BJ (cell line): ENCODE measurements at regions of chr2 and their contacts with region 1.

Region 1: DNA sequence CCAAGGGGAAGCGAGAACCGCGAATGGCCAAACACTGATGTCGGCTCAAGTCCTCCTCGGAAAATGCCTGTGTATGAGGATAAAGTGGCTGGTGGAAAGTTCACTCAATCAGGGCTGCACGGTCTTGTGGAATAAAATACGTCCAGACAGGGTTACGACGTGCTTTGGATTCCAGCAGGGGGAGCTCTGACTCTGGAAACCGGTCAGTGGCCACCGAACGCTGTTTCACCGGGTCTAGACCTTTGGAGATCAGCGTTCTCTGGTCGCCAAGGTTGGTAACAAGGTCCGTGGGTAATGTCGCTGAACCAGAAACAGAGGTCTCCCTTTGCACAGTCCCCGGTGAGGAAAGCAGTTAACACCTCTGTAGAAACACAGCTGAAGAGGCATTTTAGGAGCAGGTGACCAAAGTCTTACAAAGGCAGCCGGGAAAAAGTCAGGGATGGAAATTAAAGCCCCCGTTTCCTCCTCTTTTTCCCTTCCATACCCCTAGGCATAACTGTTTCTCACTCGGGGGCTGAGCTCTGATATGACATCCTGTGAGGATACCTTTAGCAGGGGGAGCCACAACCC is 47.8 kb downstream of the CDCA7 start:
- DNase-seq: peak; percentile 9
- H3K4me3 ChIP-seq: 0 out of 2 replicates have a peak overlapping the region, but pooled peaks have one; percentile 0
- H3K27me3 ChIP-seq: peaks cover 24% of the 10 kb centered on the region
- CTCF ChIP-seq: peak; percentile 90

Region 2: DNA sequence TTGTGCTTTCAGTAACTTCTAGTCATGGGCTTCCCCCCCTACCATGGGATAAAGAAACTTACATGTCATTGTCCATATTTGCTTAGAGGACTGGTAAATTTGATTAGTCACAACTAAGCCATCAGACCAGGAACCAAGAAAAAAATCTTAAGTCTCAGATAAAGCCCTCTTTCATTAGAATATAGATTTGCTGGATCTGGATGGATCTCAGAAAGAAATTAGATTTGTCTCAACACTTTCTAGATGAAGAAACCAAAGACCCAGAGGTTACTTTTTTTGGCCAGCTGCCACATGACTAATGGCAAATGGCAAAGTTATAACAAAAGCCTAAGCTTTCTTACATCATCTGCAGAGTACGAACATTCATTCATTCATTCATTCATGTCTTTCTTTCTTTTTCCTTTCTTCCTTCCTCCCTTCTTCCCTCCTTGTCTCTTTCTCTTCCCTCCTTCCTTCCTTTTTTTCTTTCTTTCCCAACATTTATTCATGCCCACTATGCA is 12.4 kb after region 1 on chr2:
- CTCF ChIA-PET with region 1: interaction called, 15 read pairs
- POLR2A ChIA-PET with region 1: no interaction called
- DNase-seq: no peak
- H3K4me3 ChIP-seq: no peak overlapping the region
- H3K27me3 ChIP-seq: peaks cover 6% of the 10 kb centered on the region; the same call in 1 of the 2 replicates
- CTCF ChIP-seq: no peak

Region 3: GRCh38 chr2:173448938-173449471 is 46.5 kb after region 1 on chr2:
- CTCF ChIA-PET with region 1: interaction called, 15 read pairs
- POLR2A ChIA-PET with region 1: no interaction called
- DNase-seq: peak; percentile 17
- H3K4me3 ChIP-seq: peak overlapping the region; percentile 18; the same call in 1 of the 2 replicates
- H3K27me3 ChIP-seq: no peaks in the 10 kb centered on the region
- CTCF ChIP-seq: peak; percentile 77

Region 4: DNA sequence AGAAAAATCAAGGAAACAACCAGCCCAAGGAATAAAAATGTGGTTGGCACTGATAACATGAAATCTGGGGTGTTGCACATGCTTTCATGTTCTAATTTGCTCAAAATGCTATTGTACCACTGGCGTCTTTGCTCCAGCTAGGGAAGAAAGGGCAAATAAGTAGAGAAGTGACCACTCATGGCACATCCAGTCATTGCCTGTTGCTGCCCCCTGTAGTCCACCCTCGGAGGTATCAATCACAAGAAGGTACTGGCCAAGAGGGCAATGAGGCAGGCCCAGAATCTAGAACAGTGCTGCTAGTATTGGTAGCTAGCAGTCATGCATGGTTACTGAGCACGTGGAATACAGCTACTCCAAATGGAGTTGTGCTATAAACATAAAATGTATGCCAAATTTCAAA is 165.6 kb after region 1 on chr2:
- CTCF ChIA-PET with region 1: interaction called, 77 read pairs
- POLR2A ChIA-PET with region 1: no interaction called
- DNase-seq: no peak
- H3K4me3 ChIP-seq: no peak overlapping the region
- H3K27me3 ChIP-seq: peaks cover 2% of the 10 kb centered on the region; the same call in 1 of the 2 replicates
- CTCF ChIP-seq: peak; percentile 55

Region 5: GRCh38 chr2:173667417-173667816 is 264.9 kb after region 1 on chr2:
- CTCF ChIA-PET with region 1: interaction called, 11 read pairs
- POLR2A ChIA-PET with region 1: no interaction called
- DNase-seq: no peak
- H3K4me3 ChIP-seq: no peak overlapping the region
- H3K27me3 ChIP-seq: 0 out of 2 replicates have a peak, but pooled peaks cover 1% of the 10 kb centered on the region
- CTCF ChIP-seq: peak; percentile 34; the same call in 1 of the 2 replicates

Region 6: DNA sequence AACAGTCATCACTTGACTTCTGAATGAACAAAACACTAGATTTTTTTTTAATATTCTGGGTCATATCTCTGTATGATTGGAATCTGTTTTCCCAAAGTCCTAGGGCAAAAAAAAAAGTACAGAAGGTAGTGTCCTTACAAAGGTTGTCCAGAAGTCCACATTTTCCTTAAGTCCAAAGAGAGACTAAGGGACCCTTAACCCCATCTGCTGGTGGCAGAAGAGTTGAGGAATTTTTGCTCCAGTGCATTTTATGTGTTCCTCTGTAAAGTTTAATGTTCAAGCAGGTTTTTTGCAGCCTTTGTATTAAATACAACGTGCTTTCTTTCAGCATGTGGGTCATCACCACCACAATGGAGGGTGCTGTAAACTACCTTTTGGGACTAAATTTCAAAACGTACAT is 346.8 kb after region 1 on chr2:
- CTCF ChIA-PET with region 1: interaction called, 13 read pairs
- POLR2A ChIA-PET with region 1: no interaction called
- DNase-seq: no peak
- H3K4me3 ChIP-seq: no peak overlapping the region
- H3K27me3 ChIP-seq: peaks cover 5% of the 10 kb centered on the region
- CTCF ChIP-seq: peak; percentile 56

Region 7: GRCh38 chr2:174341286-174341994 is 939.0 kb after region 1 on chr2:
- CTCF ChIA-PET with region 1: interaction called, 11 read pairs
- POLR2A ChIA-PET with region 1: no interaction called
- DNase-seq: peak; percentile 31
- H3K4me3 ChIP-seq: no peak overlapping the region
- H3K27me3 ChIP-seq: peaks cover 51% of the 10 kb centered on the region
- CTCF ChIP-seq: peak; percentile 99